Mammary epithelial cell (primary cell): ENCODE measurements at regions of chr5 and their contacts with region 1.

Region 1: GRCh38 chr5:134917070-134917815 is 12.3 kb downstream of the PCBD2 start:
- DNase-seq: no peak
- H3K4me3 ChIP-seq: no peak overlapping the region
- H3K27ac ChIP-seq: no peak overlapping the region
- H3K4me1 ChIP-seq: peaks cover 2% of the 10 kb centered on the region
- H3K27me3 ChIP-seq: no peaks in the 10 kb centered on the region
- CTCF ChIP-seq: peak; percentile 26 to 57

Region 2: GRCh38 chr5:134411546-134412266 is 505.5 kb before region 1 on chr5 and contains the start of gene CDKN2AIPNL:
- CTCF ChIA-PET with region 1: no interaction called
- dilution Hi-C with region 1: no loop called
- in situ Hi-C with region 1: no loop called
- intact Hi-C with region 1: no loop called
- DNase-seq: peak; percentile 81
- H3K4me3 ChIP-seq: peak within 1 kb of the TSS; percentile 85 to 91 (median 87)
- H3K27ac ChIP-seq: peak within 1 kb of the TSS; percentile 28
- H3K4me1 ChIP-seq: peaks cover 22% of the 10 kb centered on the region
- H3K27me3 ChIP-seq: no peaks in the 10 kb centered on the region
- CTCF ChIP-seq: peak; percentile 35 to 77
- total RNA-seq, gene CDKN2AIPNL: 28.7 to 30.0 TPM

Region 3: DNA sequence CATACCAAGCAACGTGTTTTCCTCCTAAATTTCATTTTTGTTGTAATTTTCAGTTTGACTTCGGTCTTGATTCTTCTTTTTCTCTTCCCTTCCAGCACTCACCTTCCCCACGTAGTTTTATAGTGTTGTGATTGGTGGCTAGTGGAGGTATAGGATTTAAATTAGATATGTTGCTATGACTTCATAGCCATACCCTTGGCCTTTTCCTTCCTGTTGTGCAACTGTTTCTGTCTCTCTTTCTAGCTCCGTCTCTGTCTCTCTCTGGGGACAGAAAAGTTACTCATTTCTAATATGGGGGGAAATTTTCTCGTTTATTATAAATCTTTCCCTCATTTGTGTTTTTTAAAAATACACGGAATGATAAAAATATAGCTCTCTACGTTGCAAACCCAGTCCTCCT is 92.0 kb before region 1 on chr5:
- CTCF ChIA-PET with region 1: no interaction called
- dilution Hi-C with region 1: loop called (anchors 5 kb)
- in situ Hi-C with region 1: no loop called
- intact Hi-C with region 1: no loop called
- DNase-seq: no peak
- H3K4me3 ChIP-seq: no peak overlapping the region
- H3K27ac ChIP-seq: no peak overlapping the region
- H3K4me1 ChIP-seq: no peaks in the 10 kb centered on the region
- H3K27me3 ChIP-seq: no peaks in the 10 kb centered on the region
- CTCF ChIP-seq: no peak

Region 4: DNA sequence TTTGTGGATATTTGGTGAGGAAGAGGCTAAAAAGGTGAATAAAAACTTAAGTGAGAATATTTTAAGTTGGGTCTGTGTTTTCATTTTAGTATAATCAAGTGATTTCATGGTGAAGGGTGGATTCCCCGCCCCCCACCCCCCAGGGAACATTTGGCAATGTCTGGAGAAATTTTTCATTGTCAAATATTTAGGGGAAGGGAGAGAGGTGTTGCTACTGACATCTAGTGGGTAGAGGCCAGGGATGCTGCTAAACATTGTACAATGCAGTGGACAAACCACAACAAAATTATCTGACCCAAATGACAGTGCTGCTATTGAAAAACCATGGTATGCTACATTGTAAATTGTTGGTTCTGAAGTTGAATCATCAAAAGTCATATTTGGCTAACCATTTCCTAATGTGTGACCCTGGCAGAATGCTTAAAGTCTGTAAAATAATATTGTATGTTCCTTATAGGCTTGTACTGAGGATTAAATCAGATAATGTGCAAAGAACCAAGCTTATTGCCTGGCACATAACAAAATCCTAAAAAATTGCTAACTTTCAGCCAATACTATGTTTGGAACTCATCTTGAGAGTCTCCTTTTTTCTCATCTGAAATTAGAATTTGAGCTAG is 65.8 kb before region 1 on chr5:
- CTCF ChIA-PET with region 1: no interaction called
- dilution Hi-C with region 1: loop called (anchors 10 kb)
- in situ Hi-C with region 1: no loop called
- intact Hi-C with region 1: no loop called
- DNase-seq: peak; percentile 37
- H3K4me3 ChIP-seq: no peak overlapping the region
- H3K27ac ChIP-seq: no peak overlapping the region
- H3K4me1 ChIP-seq: peaks cover 4% of the 10 kb centered on the region
- H3K27me3 ChIP-seq: no peaks in the 10 kb centered on the region
- CTCF ChIP-seq: peak; percentile 45 to 74

Region 5: GRCh38 chr5:134873987-134874830 is 43.0 kb before region 1 on chr5 and contains the start of gene TXNDC15:
- CTCF ChIA-PET with region 1: no interaction called
- dilution Hi-C with region 1: no loop called
- in situ Hi-C with region 1: no loop called
- intact Hi-C with region 1: no loop called
- DNase-seq: peak; percentile 81
- H3K4me3 ChIP-seq: peak within 1 kb of the TSS; percentile 63 to 96 (median 68)
- H3K27ac ChIP-seq: peak within 1 kb of the TSS; percentile 75
- H3K4me1 ChIP-seq: peaks cover 13% of the 10 kb centered on the region
- H3K27me3 ChIP-seq: no peaks in the 10 kb centered on the region
- CTCF ChIP-seq: no peak
- total RNA-seq, gene TXNDC15: 30.4 to 43.0 TPM

Region 6: GRCh38 chr5:134935711-134936602 is 18.7 kb after region 1 on chr5:
- CTCF ChIA-PET with region 1: no interaction called
- dilution Hi-C with region 1: no loop called
- in situ Hi-C with region 1: no loop called
- intact Hi-C with region 1: no loop called
- DNase-seq: no peak
- H3K4me3 ChIP-seq: no peak overlapping the region
- H3K27ac ChIP-seq: no peak overlapping the region
- H3K4me1 ChIP-seq: no peaks in the 10 kb centered on the region
- H3K27me3 ChIP-seq: no peaks in the 10 kb centered on the region
- CTCF ChIP-seq: no peak

Region 7: GRCh38 chr5:134975078-134975715 is 58.0 kb after region 1 on chr5:
- CTCF ChIA-PET with region 1: no interaction called
- dilution Hi-C with region 1: loop called (anchors 5 kb)
- in situ Hi-C with region 1: no loop called
- intact Hi-C with region 1: no loop called
- DNase-seq: peak; percentile 32
- H3K4me3 ChIP-seq: no peak overlapping the region
- H3K27ac ChIP-seq: no peak overlapping the region
- H3K4me1 ChIP-seq: peaks cover 8% of the 10 kb centered on the region
- H3K27me3 ChIP-seq: no peaks in the 10 kb centered on the region
- CTCF ChIP-seq: no peak

Region 8: DNA sequence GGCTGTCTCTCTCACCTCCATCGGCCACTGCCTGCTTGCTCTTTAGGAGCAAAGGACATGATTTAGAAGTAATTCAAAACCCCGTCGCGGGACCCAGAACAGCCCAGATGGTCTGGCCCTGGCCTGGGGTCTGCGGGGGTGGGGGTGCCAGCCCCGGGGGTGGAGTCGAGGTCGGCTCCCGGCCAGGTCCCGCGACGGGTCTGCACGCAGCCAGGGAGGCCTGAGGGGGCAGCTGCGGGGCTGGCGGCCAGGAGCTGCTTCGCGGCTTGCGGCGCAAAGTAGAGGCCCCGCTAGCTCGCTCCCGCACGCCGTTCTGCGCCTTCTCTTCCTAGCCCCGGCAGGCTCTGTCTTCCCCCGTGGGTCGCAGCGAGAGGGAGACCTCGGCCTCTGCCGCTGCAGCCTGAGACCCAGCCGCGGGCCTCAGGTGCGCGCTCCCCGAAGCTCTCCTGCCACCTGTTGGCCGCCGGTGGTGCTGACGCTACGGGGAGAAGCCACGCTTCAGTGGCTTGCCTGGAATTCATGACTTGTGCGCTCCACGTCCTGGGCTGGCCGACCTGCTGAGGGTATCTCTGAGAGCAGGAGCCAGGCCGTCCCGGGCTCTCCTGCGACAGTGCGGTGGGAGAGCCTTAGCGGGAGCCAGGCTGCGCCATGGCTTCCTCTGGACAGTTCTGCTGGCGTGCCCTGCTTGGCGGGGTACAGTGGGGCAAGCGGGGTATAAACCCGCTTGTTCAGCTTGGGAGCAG is 274.0 kb after region 1 on chr5:
- CTCF ChIA-PET with region 1: no interaction called
- dilution Hi-C with region 1: no loop called
- in situ Hi-C with region 1: loop called (anchors 10 to 25 kb)
- intact Hi-C with region 1: loop called (anchors 1 kb)
- DNase-seq: peak; percentile 63
- H3K4me3 ChIP-seq: peak overlapping the region in 2 of 3 experiments; percentile 35 to 54
- H3K27ac ChIP-seq: no peak overlapping the region
- H3K4me1 ChIP-seq: peaks cover 6% of the 10 kb centered on the region
- H3K27me3 ChIP-seq: no peaks in the 10 kb centered on the region
- CTCF ChIP-seq: peak; percentile 94 to 98

Region 9: GRCh38 chr5:135332519-135333150 is 415.4 kb after region 1 on chr5:
- CTCF ChIA-PET with region 1: no interaction called
- dilution Hi-C with region 1: no loop called
- in situ Hi-C with region 1: no loop called
- intact Hi-C with region 1: loop called (anchors 5 kb)
- DNase-seq: peak; percentile 36
- H3K4me3 ChIP-seq: no peak overlapping the region
- H3K27ac ChIP-seq: no peak overlapping the region
- H3K4me1 ChIP-seq: peaks cover 12% of the 10 kb centered on the region
- H3K27me3 ChIP-seq: no peaks in the 10 kb centered on the region
- CTCF ChIP-seq: peak; percentile 36 to 59

Region 10: DNA sequence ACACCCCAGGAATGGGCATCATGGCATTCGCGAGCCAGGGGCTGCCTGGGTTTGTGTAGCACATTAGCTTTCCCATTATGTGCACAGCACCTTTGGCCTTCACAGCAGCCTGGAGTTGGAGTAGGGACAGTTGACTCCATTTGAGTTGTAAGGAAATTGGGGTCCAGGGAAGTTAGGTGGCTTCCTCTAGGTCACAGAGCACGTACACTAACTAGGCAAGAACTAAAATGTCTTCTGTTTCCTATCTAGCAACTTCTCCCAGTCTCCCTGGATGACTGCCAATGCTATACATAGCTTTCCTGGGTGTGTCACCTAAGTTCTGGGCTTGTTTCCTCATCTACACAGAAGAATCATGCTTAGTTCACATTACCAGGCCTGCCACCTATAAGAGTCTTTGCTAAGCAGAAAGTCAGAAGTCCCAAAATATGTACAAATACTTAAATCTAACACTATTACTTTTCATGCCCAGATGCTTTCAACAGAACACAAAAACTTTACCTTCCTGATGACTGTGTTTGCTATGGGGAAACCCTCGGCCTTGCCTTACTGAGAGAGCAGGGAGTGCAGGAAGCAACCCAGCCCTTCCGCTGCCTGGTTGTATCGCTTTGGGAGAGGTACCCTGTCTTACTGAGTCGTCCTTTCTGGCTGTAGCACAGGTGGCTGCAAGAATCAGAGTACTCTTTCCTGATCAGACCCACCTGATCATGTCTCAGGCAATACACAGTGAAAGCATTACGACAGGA is 469.8 kb after region 1 on chr5:
- CTCF ChIA-PET with region 1: no interaction called
- dilution Hi-C with region 1: no loop called
- in situ Hi-C with region 1: no loop called
- intact Hi-C with region 1: no loop called
- DNase-seq: peak; percentile 91
- H3K4me3 ChIP-seq: no peak overlapping the region
- H3K27ac ChIP-seq: peak overlapping the region; percentile 92
- H3K4me1 ChIP-seq: peaks cover 76% of the 10 kb centered on the region
- H3K27me3 ChIP-seq: no peaks in the 10 kb centered on the region
- CTCF ChIP-seq: no peak